ENCODE measurements at regions of chr1 and their contacts with region 1.

Region 1: GRCh38 chr1:35930593-35931445 is at the start of gene AGO3:
- DNase-seq: peak; percentile 87
- H3K4me3 Mint-ChIP-seq: peak within 1 kb of the TSS; percentile 93
- H3K27ac Mint-ChIP-seq: peak within 1 kb of the TSS; percentile 97
- H3K4me1 Mint-ChIP-seq: peaks cover 36% of the 10 kb centered on the region
- H3K27me3 Mint-ChIP-seq: no peaks in the 10 kb centered on the region
- total RNA-seq, gene AGO3: 26.1 and 33.6 TPM in 2 replicates

Region 2: DNA sequence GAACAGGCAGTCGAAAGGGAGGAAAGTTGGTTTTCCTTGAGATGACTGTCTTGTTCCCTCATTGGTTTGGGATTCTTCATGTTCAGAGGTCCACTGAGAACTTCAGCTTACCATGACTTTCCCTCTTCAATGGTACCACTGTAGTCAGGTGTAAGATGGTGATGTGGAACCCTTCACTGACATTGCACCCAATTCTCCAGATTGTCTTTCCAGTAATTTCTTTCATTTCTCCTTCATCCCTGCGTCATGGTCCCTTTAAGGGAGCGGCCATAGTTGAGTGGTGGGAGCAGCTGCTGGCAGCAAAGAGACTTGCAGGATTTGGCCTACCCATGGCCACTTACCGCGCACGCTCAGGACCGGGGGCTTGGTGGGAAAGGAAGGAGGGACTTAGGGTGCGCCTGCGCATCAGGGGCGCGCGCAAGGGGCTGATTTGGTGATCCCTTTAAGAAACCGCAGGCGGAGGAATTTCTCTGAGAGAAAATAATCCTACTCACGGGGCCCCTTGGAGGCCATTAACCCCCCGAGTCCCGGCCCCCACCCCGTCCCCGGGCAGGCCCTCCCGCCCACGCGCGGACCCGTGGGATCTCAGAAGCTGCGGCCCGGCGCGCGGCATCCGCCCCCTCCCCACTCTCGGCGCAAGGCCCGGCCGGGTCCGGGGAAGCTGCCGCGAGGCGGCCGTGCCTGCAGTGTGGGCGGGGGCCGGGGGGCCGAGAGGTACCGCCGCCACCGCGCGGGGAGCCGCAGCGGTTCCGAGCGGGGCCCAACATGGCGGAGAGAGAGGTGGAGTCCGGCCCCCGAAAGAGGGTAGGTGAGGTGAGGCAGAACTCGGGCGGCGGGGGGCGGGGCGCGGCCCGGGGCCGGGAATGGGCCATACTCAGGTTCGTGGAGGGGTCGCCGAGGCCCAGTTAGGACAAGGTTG is 662.3 kb before region 1 on chr1 and contains the start of gene ZMYM4:
- intact Hi-C with region 1: loop called (anchors 5 kb)
- DNase-seq: peak; percentile 88
- H3K4me3 Mint-ChIP-seq: peak within 1 kb of the TSS; percentile 87
- H3K27ac Mint-ChIP-seq: peak within 1 kb of the TSS; percentile 93
- H3K4me1 Mint-ChIP-seq: peaks cover 38% of the 10 kb centered on the region
- H3K27me3 Mint-ChIP-seq: no peaks in the 10 kb centered on the region
- total RNA-seq, gene ZMYM4: 25.1 and 33.0 TPM in 2 replicates

Region 3: GRCh38 chr1:35715568-35716002 is 215.2 kb before region 1 on chr1:
- intact Hi-C with region 1: loop called (anchors 5 kb)
- DNase-seq: peak; percentile 69
- H3K4me3 Mint-ChIP-seq: peak overlapping the region; percentile 56
- H3K27ac Mint-ChIP-seq: no peak overlapping the region
- H3K4me1 Mint-ChIP-seq: peaks cover 37% of the 10 kb centered on the region
- H3K27me3 Mint-ChIP-seq: peaks cover 4% of the 10 kb centered on the region

Region 4: GRCh38 chr1:35882945-35883634 is 47.7 kb before region 1 on chr1 and contains the start of gene AGO1:
- intact Hi-C with region 1: loop called (anchors 1 kb)
- DNase-seq: peak; percentile 97
- H3K4me3 Mint-ChIP-seq: peak within 1 kb of the TSS; percentile 95
- H3K27ac Mint-ChIP-seq: peak within 1 kb of the TSS; percentile 64
- H3K4me1 Mint-ChIP-seq: peaks cover 48% of the 10 kb centered on the region
- H3K27me3 Mint-ChIP-seq: peaks cover 6% of the 10 kb centered on the region
- total RNA-seq, gene AGO1: 39.0 and 39.5 TPM in 2 replicates

Region 5: DNA sequence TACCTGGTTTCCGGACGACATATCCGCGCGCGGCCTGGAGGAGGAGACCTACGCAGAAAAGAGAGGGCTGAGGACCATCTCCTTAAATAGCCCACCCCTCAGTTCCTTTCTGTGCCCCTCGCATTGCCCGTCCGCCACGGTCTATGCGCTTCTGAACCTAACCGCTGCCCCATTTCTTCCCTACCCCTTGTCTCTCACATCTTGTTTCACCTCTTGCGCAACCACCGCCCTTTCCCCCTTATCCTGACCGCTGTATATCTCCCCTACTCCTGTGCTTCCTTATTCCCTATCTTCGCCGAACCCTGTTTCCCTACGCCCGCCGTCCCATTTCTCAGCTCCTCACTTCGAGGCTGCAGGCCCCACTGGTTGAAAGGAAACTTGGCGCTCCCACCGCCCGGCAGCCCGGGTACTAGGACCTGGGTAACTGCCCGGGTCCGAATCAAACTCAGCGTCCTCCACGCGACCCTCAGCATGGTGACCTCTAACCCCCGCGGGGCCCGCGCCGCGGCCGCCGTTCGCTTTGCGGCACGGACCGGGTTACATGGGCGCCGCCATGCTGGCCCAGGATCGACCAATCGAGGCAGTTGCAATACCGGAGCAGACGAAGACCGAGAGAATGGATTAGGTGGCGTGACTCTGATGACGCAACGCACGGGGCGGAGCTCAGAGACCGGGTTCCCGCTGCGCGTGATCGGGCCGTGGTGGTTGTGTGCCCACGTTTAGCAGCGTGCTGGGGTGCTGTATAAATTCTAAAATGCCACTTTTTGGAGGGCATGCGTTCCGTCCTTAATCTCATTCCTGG is 533.2 kb after region 1 on chr1 and contains the start of gene MRPS15:
- intact Hi-C with region 1: loop called (anchors 5 kb)
- DNase-seq: peak; percentile 92
- H3K4me3 Mint-ChIP-seq: peak within 1 kb of the TSS; percentile 100
- H3K27ac Mint-ChIP-seq: peak within 1 kb of the TSS; percentile 97
- H3K4me1 Mint-ChIP-seq: peaks cover 63% of the 10 kb centered on the region
- H3K27me3 Mint-ChIP-seq: no peaks in the 10 kb centered on the region
- total RNA-seq, gene MRPS15: 118 and 121 TPM in 2 replicates